Mammary epithelial cell (primary cell): ENCODE measurements at regions of chr1 and their contacts with region 1.

Region 1: DNA sequence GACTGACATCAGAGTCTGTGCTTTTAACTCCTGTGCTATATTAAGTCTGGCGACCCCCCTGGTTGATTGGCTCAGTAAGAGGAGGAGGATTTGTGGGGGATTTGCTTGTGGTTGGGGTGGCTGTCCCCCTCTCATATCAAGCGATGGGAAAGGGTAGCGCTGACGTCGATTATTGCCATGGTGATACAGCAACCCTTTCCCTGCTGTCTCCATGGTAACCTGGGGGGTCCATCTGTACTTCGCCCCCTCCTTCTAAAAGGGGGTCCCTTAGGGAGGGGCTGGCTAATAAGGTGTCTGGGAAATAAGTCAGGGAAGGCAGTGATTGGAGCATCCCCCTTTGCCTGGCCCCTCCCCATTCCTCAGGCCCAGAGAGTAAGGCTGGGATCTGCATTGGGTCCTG is 4.7 kb downstream of the FAM229A start:
- DNase-seq: no peak
- H3K4me3 ChIP-seq: no peak overlapping the region
- H3K27ac ChIP-seq: no peak overlapping the region
- H3K4me1 ChIP-seq: peaks cover 14% of the 10 kb centered on the region
- H3K27me3 ChIP-seq: no peaks in the 10 kb centered on the region
- CTCF ChIP-seq: no peak

Region 2: GRCh38 chr1:32299327-32299726 is 58.3 kb before region 1 on chr1:
- CTCF ChIA-PET with region 1: no interaction called
- dilution Hi-C with region 1: loop called (anchors 5 kb)
- in situ Hi-C with region 1: no loop called
- intact Hi-C with region 1: no loop called
- DNase-seq: no peak
- H3K4me3 ChIP-seq: no peak overlapping the region
- H3K27ac ChIP-seq: no peak overlapping the region
- H3K4me1 ChIP-seq: peaks cover 8% of the 10 kb centered on the region
- H3K27me3 ChIP-seq: no peaks in the 10 kb centered on the region
- CTCF ChIP-seq: no peak

Region 3: GRCh38 chr1:32394141-32394889 is 36.7 kb after region 1 on chr1 and contains the start of gene BSDC1:
- CTCF ChIA-PET with region 1: no interaction called
- dilution Hi-C with region 1: loop called (anchors 5 kb)
- in situ Hi-C with region 1: no loop called
- intact Hi-C with region 1: no loop called
- DNase-seq: peak; percentile 99
- H3K4me3 ChIP-seq: peak within 1 kb of the TSS; percentile 64 to 91 (median 76)
- H3K27ac ChIP-seq: peak within 1 kb of the TSS; percentile 81
- H3K4me1 ChIP-seq: peaks cover 13% of the 10 kb centered on the region
- H3K27me3 ChIP-seq: no peaks in the 10 kb centered on the region
- CTCF ChIP-seq: no peak
- total RNA-seq, gene BSDC1: 47.6 to 78.5 TPM